Panc1 (cell line): ENCODE measurements at regions of chr14 and their contacts with region 1.

Region 1: DNA sequence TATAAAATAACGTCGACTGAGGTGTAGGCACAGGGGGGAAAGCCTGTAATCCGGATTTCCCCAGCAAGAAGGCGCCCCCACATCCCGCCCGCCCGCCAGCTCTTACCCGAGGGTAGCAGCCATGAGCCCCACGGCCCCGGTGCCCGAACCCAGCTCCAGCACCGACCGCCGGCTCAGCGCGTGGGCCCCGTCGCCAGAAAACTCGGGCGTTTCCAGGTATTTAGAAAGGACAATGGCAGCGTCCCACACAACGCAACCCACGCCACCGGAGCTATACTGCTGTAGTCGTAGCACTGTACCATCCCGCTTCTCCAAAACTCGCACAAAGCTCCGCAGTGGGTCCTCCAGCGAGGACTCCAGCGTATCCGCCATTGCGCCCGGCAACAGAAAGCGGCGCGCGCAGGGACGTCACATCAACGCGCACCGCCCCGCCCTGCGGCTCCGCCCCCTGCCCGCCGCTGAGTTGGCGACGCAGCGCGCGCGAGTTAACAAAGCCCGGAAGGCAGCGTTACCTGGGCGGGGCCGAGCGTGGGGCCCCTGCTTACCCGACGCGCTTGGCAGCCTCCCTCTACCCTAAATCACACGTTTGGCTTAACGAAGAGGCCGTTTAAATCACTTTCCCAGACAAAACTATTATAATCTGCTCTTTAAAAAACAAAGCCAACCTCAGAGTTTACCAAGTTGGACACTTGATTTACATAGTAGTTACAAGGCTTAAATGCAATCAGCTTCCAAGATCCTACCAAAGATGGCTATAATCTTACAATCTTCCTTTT is at the start of gene VCPKMT:
- DNase-seq: peak; percentile 46
- ATAC-seq: peak; percentile 100
- H3K4me3 ChIP-seq: peak within 1 kb of the TSS; percentile 79 to 80
- H3K27ac ChIP-seq: peak within 1 kb of the TSS; percentile 97
- H3K4me1 ChIP-seq: peaks cover 8% of the 10 kb centered on the region
- H3K27me3 ChIP-seq: no peaks in the 10 kb centered on the region
- CTCF ChIP-seq: no peak
- total RNA-seq, gene VCPKMT: 6.1 TPM

Region 2: DNA sequence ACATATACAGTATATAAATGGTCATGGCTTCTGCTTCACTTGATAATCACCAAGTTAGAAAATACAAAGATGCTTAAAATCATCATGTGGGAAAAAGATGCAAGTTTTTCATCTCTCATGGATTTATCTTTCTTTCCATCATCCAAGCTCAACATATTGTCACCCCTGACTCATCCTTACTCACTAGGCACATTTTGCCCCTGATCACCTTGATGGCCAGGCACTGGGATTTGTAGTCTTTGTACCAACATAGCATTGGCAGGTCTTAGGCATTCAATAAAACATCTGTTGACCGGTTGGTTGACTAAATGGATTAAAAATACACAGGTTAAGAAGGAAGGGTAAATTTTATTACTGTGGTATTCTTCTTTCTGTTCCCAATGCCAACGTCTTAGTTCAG is 320.3 kb before region 1 on chr14:
- CTCF ChIA-PET with region 1: no interaction called
- POLR2A ChIA-PET with region 1: interaction called, 12 read pairs
- in situ Hi-C with region 1: no loop called
- intact Hi-C with region 1: no loop called
- DNase-seq: no peak
- ATAC-seq: no peak
- H3K4me3 ChIP-seq: no peak overlapping the region
- H3K27ac ChIP-seq: no peak overlapping the region
- H3K4me1 ChIP-seq: no peaks in the 10 kb centered on the region
- H3K27me3 ChIP-seq: no peaks in the 10 kb centered on the region
- CTCF ChIP-seq: no peak

Region 3: DNA sequence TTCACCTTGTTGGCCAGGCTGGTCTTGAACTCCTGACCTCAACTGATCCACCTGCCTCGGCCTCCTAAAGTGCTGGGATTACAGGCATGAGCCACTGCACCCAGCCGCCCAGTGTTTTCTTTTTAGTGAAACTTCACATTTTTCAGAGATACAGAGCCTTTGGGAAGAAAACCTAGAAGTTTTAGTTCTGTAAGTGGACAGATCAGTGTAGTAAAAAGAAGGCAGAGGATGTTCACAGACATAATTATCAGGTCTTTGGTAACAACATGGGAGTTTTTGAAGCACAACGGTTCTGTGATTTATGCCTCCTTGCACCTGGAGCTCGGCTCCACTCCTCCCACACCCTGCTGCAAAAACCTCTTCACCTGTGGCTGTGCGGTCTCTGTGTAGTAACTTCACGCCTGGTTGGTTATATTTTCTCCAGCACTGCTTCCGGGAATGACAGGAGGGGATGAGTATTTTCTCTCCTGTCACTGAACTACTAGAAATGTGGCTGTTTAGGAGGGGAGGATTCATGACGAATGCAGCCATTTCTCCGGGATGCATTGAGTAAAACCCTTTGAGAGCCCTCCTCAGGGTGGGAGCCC is 156.5 kb before region 1 on chr14:
- CTCF ChIA-PET with region 1: no interaction called
- POLR2A ChIA-PET with region 1: no interaction called
- in situ Hi-C with region 1: no loop called
- intact Hi-C with region 1: no loop called
- DNase-seq: no peak
- ATAC-seq: no peak
- H3K4me3 ChIP-seq: no peak overlapping the region
- H3K27ac ChIP-seq: peak overlapping the region; percentile 80
- H3K4me1 ChIP-seq: peaks cover 29% of the 10 kb centered on the region
- H3K27me3 ChIP-seq: no peaks in the 10 kb centered on the region
- CTCF ChIP-seq: no peak

Region 4: DNA sequence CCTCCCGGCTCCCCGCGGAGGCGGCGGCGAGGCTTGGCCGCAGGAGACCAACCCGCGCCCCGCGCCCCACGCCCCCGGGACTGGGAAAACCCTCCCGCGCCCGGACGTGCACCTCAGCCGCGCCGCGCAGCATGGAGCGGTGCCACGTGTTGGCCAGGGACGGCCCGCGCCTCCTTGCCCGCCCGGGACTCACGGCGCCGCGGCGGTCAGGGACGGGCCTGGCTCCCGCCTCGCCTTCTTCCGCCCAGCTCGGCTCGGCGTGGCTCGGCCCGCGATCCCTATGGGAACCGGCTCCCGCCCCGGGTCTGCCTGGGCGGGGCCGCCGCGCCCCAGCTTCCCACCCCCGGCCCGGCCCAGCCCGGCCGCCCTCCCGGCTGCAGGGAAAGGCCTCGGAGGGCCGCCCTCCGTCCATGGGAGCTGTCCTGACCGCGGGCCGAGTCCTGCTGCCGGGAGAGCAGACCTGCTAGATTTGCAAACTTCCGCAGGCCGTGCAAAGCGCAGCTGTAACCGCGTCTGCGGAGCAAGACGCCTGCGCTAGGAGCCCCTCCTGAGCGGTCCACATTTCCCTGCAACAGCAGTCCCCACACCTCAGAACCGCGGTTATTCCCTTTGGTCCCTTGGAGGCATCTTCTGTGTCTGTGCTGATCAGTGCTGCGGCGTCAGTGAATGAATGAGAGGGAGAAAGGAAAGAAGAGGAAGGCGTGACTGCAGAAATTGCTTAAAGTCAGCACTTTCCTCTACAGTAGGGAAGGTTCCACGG is 280.4 kb after region 1 on chr14 and contains the start of gene CDKL1:
- CTCF ChIA-PET with region 1: no interaction called
- POLR2A ChIA-PET with region 1: interaction called, 11 read pairs
- in situ Hi-C with region 1: no loop called
- intact Hi-C with region 1: no loop called
- DNase-seq: peak; percentile 12
- ATAC-seq: peak; percentile 95
- H3K4me3 ChIP-seq: peak within 1 kb of the TSS; percentile 68 to 93
- H3K27ac ChIP-seq: peak within 1 kb of the TSS; percentile 81
- H3K4me1 ChIP-seq: peaks cover 19% of the 10 kb centered on the region
- H3K27me3 ChIP-seq: no peaks in the 10 kb centered on the region
- CTCF ChIP-seq: no peak
- total RNA-seq, gene CDKL1: 5.8 TPM